K562 (cell line): ENCODE measurements at regions of chr10 and their contacts with region 1.

Region 1: GRCh38 chr10:61284222-61284890 is 168.8 kb downstream of the TMEM26 start:
- DNase-seq: peak; percentile 28 to 69 (median 48)
- ATAC-seq: peak; percentile 75
- H3K4me3 ChIP-seq: no peak overlapping the region
- H3K27ac ChIP-seq: no peak overlapping the region
- H3K4me1 ChIP-seq: no peaks in the 10 kb centered on the region
- H3K27me3 ChIP-seq: no peaks in the 10 kb centered on the region
- CTCF ChIP-seq: peak; percentile 54 to 85 (median 57); a peak in 5 of 6 replicates
- EP300 ChIP-seq: no peak
- POLR2A ChIP-seq: no peak
- RAD21 ChIP-seq: peak; percentile 85 to 88

Region 2: DNA sequence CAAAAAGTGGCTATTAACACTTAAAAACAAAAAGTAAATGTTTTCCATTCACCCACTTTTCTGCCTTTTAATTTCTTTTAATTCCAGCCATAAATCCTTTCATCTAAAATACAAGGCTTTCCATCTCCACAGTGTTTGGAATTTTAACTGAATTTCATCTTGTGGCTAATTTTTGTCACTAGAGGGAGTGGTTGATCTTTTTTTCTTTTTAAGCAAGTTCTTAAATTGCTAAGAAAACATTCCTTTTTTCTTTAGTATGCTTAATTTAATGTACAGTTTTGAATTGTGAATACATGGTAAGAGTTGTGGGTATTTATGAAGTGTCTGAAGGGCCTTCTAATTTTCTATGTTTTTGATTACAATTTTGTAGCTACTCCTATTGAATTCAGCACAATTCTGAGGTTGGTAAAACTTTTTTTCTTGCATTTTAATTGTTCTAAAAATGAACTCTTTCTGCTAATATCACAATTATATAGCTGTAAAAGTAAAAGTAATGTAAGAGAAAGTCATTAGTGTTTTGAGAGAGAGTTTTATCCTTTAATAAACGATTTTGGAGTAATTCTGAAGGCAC is 839.8 kb before region 1 on chr10:
- CTCF ChIA-PET with region 1: interaction called, 8 read pairs
- POLR2A ChIA-PET with region 1: no interaction called
- in situ Hi-C with region 1: no loop called
- intact Hi-C with region 1: loop called (anchors 10 kb)
- DNase-seq: peak in 1 of 4 experiments; percentile 30
- ATAC-seq: no peak
- H3K4me3 ChIP-seq: no peak overlapping the region
- H3K27ac ChIP-seq: no peak overlapping the region
- H3K4me1 ChIP-seq: no peaks in the 10 kb centered on the region
- H3K27me3 ChIP-seq: peaks cover 0 to 2% of the 10 kb centered on the region in 2 experiments; a peak in 1 of 5 replicates
- CTCF ChIP-seq: peak in 2 of 3 experiments; percentile 26 to 71; a peak in 3 of 6 replicates
- EP300 ChIP-seq: no peak
- POLR2A ChIP-seq: no peak
- RAD21 ChIP-seq: peak; percentile 77 to 84

Region 3: DNA sequence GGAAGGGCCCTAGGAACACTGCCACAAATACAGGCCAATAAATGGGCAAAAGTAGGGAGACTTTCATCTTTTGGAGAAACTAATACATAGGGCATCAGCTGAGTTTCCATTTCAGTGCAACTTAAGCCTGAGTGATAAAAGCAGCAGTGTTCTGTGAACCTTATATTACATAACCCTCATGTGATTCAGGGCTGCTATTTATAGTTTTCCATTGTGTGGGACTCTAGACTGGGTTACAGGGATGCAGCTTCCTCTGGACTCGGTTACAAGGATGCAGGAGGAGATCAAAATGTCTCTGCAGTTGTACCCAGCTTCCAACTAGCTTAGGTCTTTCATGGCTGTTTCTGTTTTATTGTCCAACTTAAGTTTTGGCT is 473.6 kb before region 1 on chr10:
- CTCF ChIA-PET with region 1: interaction called, 16 read pairs
- POLR2A ChIA-PET with region 1: no interaction called
- in situ Hi-C with region 1: loop called (anchors 5 kb)
- intact Hi-C with region 1: no loop called
- DNase-seq: no peak
- ATAC-seq: no peak
- H3K4me3 ChIP-seq: no peak overlapping the region
- H3K27ac ChIP-seq: no peak overlapping the region
- H3K4me1 ChIP-seq: no peaks in the 10 kb centered on the region
- H3K27me3 ChIP-seq: no peaks in the 10 kb centered on the region
- CTCF ChIP-seq: no peak
- EP300 ChIP-seq: no peak
- POLR2A ChIP-seq: no peak
- RAD21 ChIP-seq: no peak

Region 4: GRCh38 chr10:60816628-60817397 is 467.5 kb before region 1 on chr10:
- CTCF ChIA-PET with region 1: interaction called, 16 read pairs
- POLR2A ChIA-PET with region 1: no interaction called
- in situ Hi-C with region 1: loop called (anchors 5 kb)
- intact Hi-C with region 1: loop called (anchors 1 kb)
- DNase-seq: peak; percentile 87 to 89 (median 88)
- ATAC-seq: peak; percentile 95
- H3K4me3 ChIP-seq: no peak overlapping the region
- H3K27ac ChIP-seq: no peak overlapping the region
- H3K4me1 ChIP-seq: no peaks in the 10 kb centered on the region
- H3K27me3 ChIP-seq: no peaks in the 10 kb centered on the region
- CTCF ChIP-seq: peak; percentile 80 to 93 (median 82)
- EP300 ChIP-seq: no peak
- POLR2A ChIP-seq: no peak
- RAD21 ChIP-seq: peak; percentile 95 to 98

Region 5: DNA sequence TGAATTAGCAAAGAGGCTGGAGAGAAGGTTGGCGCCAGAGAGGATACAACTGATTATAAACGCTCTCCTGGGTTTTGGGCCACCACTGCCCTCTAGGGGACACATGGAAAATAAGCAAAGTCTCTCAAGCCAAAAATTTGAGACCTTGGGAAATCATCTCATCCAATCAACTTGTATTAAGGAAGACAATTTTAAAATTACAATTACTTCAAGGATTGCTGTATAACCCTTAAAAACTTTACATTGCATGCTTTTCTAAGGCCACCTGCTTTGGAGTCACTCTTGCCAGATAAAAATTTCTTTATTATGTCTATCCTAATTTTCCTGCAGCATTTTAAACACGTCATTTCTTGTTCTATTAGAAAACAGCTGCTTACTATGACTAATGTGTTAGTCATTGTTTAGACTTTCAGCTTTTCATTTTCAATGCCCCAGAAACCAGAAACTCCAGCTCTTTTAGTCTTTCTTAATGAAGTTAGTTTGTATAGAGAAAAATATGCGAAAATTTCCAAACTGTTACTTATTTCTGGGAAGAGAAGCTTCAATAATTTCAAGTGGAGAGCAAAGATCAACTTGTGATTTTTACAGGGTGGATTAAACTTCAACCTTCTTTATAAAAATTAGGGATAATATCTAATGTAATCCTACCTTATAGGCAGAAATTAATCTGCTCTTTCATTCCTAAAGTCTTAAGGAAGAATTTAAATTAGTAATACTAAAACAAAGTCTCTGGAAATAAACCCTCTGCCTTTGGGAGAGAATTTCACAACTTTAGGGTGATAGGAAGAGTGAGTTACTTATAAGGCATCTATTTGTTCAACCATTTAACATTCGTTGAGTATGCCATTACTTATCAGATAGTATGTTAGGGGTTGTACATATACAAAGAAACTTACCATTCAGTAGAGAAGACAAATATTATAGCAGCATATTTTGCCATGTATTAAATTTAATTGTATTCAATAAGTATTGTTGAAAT is 319.8 kb before region 1 on chr10:
- CTCF ChIA-PET with region 1: no interaction called
- POLR2A ChIA-PET with region 1: no interaction called
- in situ Hi-C with region 1: no loop called
- intact Hi-C with region 1: loop called (anchors 5 kb)
- DNase-seq: peak; percentile 71 to 88 (median 78)
- ATAC-seq: peak; percentile 86
- H3K4me3 ChIP-seq: no peak overlapping the region
- H3K27ac ChIP-seq: no peak overlapping the region
- H3K4me1 ChIP-seq: peaks cover 3 to 24% of the 10 kb centered on the region in 2 experiments; a peak in 4 of 5 replicates
- H3K27me3 ChIP-seq: no peaks in the 10 kb centered on the region
- CTCF ChIP-seq: peak; percentile 82 to 94 (median 87)
- EP300 ChIP-seq: 0 out of 2 replicates have a peak, but pooled peaks have one; percentile 20
- POLR2A ChIP-seq: no peak
- RAD21 ChIP-seq: peak; percentile 91 to 94

Region 6: GRCh38 chr10:61140765-61141392 is 143.5 kb before region 1 on chr10:
- CTCF ChIA-PET with region 1: interaction called, 3 read pairs
- POLR2A ChIA-PET with region 1: no interaction called
- in situ Hi-C with region 1: no loop called
- intact Hi-C with region 1: loop called (anchors 2 kb)
- DNase-seq: peak; percentile 27 to 62 (median 38)
- ATAC-seq: peak; percentile 83
- H3K4me3 ChIP-seq: no peak overlapping the region
- H3K27ac ChIP-seq: no peak overlapping the region
- H3K4me1 ChIP-seq: no peaks in the 10 kb centered on the region
- H3K27me3 ChIP-seq: no peaks in the 10 kb centered on the region
- CTCF ChIP-seq: peak; percentile 52 to 79 (median 67); a peak in 5 of 6 replicates
- EP300 ChIP-seq: no peak
- POLR2A ChIP-seq: no peak
- RAD21 ChIP-seq: peak; percentile 70 to 79